Heart left ventricle (tissue), 16 donors: ENCODE measurements at regions of chr1 and their contacts with region 1.

Region 1: GRCh38 chr1:42913426-42914091 is 45.1 kb downstream of the SLC2A1 start:
- DNase-seq: no peak
- ATAC-seq: peak in 3 of 4 donors; percentile 74 to 86 (median 75)
- H3K4me3 ChIP-seq: no peak overlapping the region
- H3K27ac ChIP-seq: no peak overlapping the region
- H3K4me1 ChIP-seq: no peaks in the 10 kb centered on the region
- H3K27me3 ChIP-seq: no peaks in the 10 kb centered on the region
- CTCF ChIP-seq: peak; percentile 65 to 84 (median 76)
- POLR2A ChIP-seq: no peak

Region 2: GRCh38 chr1:42576935-42577334 is 336.6 kb before region 1 on chr1:
- intact Hi-C with region 1: loop called in 1 of 10 experiments (anchors 10 kb)
- DNase-seq: no peak
- ATAC-seq: no peak
- H3K4me3 ChIP-seq: no peak overlapping the region
- H3K27ac ChIP-seq: no peak overlapping the region
- H3K4me1 ChIP-seq: no peaks in the 10 kb centered on the region
- H3K27me3 ChIP-seq: no peaks in the 10 kb centered on the region
- CTCF ChIP-seq: no peak
- POLR2A ChIP-seq: no peak

Region 3: GRCh38 chr1:42730988-42731387 is 182.6 kb before region 1 on chr1:
- intact Hi-C with region 1: no loop called
- DNase-seq: no peak
- ATAC-seq: no peak
- H3K4me3 ChIP-seq: no peak overlapping the region
- H3K27ac ChIP-seq: no peak overlapping the region
- H3K4me1 ChIP-seq: no peaks in the 10 kb centered on the region
- H3K27me3 ChIP-seq: no peaks in the 10 kb centered on the region
- CTCF ChIP-seq: no peak
- POLR2A ChIP-seq: no peak

Region 4: GRCh38 chr1:42777852-42778251 is 135.7 kb before region 1 on chr1:
- intact Hi-C with region 1: loop called in 4 of 10 experiments (anchors 2 to 10 kb)
- DNase-seq: no peak
- ATAC-seq: peak in 3 of 4 donors; percentile 53 to 71 (median 63)
- H3K4me3 ChIP-seq: no peak overlapping the region
- H3K27ac ChIP-seq: no peak overlapping the region
- H3K4me1 ChIP-seq: peaks cover 0 to 3% (median 0%) of the 10 kb centered on the region in 12 donors
- H3K27me3 ChIP-seq: no peaks in the 10 kb centered on the region
- CTCF ChIP-seq: peak; percentile 35 to 65 (median 56)
- POLR2A ChIP-seq: no peak

Region 5: DNA sequence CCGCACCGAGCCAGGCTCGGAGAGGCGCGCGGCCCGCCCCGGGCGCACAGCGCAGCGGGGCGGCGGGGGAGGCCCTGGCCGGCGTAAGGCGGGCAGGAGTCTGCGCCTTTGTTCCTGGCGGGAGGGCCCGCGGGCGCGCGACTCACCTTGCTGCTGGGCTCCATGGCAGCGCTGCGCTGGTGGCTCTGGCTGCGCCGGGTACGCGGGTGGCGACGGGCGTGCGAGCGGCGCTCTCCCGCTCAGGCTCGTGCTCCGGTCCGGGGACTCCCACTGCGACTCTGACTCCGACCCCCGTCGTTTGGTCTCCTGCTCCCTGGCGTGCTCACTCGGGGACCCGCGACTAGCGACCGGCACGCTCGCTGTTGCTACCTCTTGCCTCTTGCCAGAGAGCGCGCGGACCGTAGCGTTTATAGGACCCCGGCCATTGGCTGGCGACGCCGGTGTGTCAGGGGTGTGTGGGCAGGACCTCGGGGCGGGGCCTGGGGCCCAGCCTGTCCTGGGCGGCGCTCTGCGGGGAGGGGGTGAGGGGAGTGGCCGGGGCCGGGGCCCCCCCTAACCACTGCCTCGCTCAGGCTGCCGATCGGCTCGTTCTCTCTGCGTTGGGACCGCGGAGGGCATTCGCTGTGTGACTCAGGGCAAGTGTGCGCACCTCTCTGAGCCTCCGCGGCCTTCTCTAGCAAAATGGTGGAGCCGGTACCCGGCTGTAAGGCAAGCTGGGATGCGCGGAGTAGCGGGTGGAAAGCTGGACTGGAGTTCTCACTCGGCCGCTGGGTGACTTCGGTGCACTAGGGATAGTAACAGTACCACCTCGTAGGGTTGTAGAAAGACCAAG is 45.1 kb after region 1 on chr1 and contains the start of gene SLC2A1:
- intact Hi-C with region 1: loop called in 1 of 10 experiments (anchors 2 kb)
- DNase-seq: peak; percentile 84 to 95 (median 93)
- ATAC-seq: peak; percentile 91 to 98 (median 94)
- H3K4me3 ChIP-seq: peak within 1 kb of the TSS; percentile 58 to 97 (median 72)
- H3K27ac ChIP-seq: peak within 1 kb of the TSS; percentile 49 to 93 (median 86)
- H3K4me1 ChIP-seq: peaks cover 0 to 53% (median 20%) of the 10 kb centered on the region in 12 donors
- H3K27me3 ChIP-seq: peaks cover 0 to 10% (median 0%) of the 10 kb centered on the region in 9 donors
- CTCF ChIP-seq: no peak
- POLR2A ChIP-seq: peak; percentile 28 to 86
- total RNA-seq, gene SLC2A1: 19.0 to 88.1 (median 29.9) TPM

Region 6: GRCh38 chr1:43073490-43074230 is 160.1 kb after region 1 on chr1:
- intact Hi-C with region 1: loop called in 9 of 10 experiments (anchors 1 to 2 kb)
- DNase-seq: peak in 4 of 5 donors; percentile 64 to 78 (median 68)
- ATAC-seq: peak; percentile 68 to 91 (median 88)
- H3K4me3 ChIP-seq: no peak overlapping the region
- H3K27ac ChIP-seq: peak overlapping the region in 2 of 12 donors; percentile 40 to 44
- H3K4me1 ChIP-seq: peaks cover 0 to 9% (median 0%) of the 10 kb centered on the region in 12 donors
- H3K27me3 ChIP-seq: peaks cover 0 to 2% (median 0%) of the 10 kb centered on the region in 9 donors
- CTCF ChIP-seq: peak; percentile 69 to 93 (median 84)
- POLR2A ChIP-seq: no peak